K562 (cell line): ENCODE measurements at regions of chr19 and their contacts with region 1.

Region 1: GRCh38 chr19:19554074-19555023 is 16.3 kb downstream of the CILP2 start:
- DNase-seq: peak; percentile 78 to 88 (median 85)
- ATAC-seq: peak; percentile 88
- H3K4me3 ChIP-seq: no peak overlapping the region
- H3K27ac ChIP-seq: no peak overlapping the region
- H3K4me1 ChIP-seq: peaks cover 0 to 27% of the 10 kb centered on the region in 2 experiments; a peak in 2 of 5 replicates
- H3K27me3 ChIP-seq: peaks cover 2 to 36% of the 10 kb centered on the region in 2 experiments; a peak in 4 of 5 replicates
- CTCF ChIP-seq: peak; percentile 76 to 87 (median 80)
- EP300 ChIP-seq: no peak
- POLR2A ChIP-seq: no peak
- RAD21 ChIP-seq: peak; percentile 15 to 70; a peak in 2 of 4 replicates

Region 2: GRCh38 chr19:19423322-19423721 is 131.0 kb before region 1 on chr19:
- CTCF ChIA-PET with region 1: no interaction called
- POLR2A ChIA-PET with region 1: no interaction called
- in situ Hi-C with region 1: no loop called
- intact Hi-C with region 1: no loop called
- DNase-seq: no peak
- ATAC-seq: no peak
- H3K4me3 ChIP-seq: no peak overlapping the region
- H3K27ac ChIP-seq: no peak overlapping the region
- H3K4me1 ChIP-seq: peaks cover 0 to 8% of the 10 kb centered on the region in 2 experiments; a peak in 3 of 5 replicates
- H3K27me3 ChIP-seq: no peaks in the 10 kb centered on the region
- CTCF ChIP-seq: no peak
- EP300 ChIP-seq: no peak
- POLR2A ChIP-seq: no peak
- RAD21 ChIP-seq: no peak

Region 3: DNA sequence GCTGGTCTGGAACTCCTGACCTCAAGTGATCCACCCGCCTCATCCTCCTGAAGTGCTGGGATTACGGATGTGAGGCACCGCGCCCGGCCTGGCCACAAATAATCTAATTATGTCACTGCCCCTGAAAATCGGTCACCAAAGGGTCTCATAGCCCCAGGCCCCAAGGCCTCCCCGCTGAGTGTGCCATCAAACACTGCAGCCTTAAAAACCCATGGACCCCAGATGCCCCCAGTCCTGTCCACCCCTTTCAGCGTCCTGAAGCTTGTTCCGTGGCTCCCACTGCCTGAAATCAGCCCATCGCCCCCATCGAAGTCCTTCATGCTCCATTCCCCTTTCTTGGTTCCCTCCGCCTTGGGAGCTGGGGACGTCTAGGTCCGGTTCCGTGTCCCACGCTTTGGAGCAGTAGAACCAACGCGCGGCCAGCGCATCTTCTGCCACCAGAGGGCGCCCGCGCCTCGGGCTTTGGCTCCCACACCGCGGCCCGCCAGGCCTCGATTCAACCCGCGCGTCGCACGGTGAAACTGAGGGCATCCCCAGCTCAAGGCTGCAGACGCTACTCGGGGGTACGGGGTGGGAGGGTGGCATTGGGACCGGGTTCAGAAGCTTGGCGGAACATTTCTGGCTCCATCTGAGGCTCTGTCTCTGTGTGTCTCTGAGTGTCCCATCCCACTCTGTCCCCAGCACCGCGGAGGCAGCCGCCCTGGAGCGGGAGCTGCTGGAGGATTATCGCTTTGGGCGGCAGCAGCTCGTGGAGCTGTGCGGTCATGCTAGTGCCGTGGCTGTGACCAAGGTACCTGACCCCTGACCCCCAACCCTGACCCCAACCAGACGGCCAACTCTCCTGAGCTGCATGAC is 22.2 kb before region 1 on chr19:
- CTCF ChIA-PET with region 1: interaction called, 9 read pairs
- POLR2A ChIA-PET with region 1: interaction called, 4 read pairs
- in situ Hi-C with region 1: no loop called
- intact Hi-C with region 1: loop called (anchors 1 kb)
- DNase-seq: peak; percentile 79 to 87 (median 80)
- ATAC-seq: peak; percentile 89
- H3K4me3 ChIP-seq: no peak overlapping the region
- H3K27ac ChIP-seq: no peak overlapping the region
- H3K4me1 ChIP-seq: peaks cover 5 to 25% of the 10 kb centered on the region in 2 experiments
- H3K27me3 ChIP-seq: no peaks in the 10 kb centered on the region
- CTCF ChIP-seq: peak; percentile 89 to 94 (median 90)
- EP300 ChIP-seq: no peak
- POLR2A ChIP-seq: 0 out of 2 replicates have a peak, but pooled peaks have one; percentile 33
- RAD21 ChIP-seq: peak; percentile 87 to 91

Region 4: DNA sequence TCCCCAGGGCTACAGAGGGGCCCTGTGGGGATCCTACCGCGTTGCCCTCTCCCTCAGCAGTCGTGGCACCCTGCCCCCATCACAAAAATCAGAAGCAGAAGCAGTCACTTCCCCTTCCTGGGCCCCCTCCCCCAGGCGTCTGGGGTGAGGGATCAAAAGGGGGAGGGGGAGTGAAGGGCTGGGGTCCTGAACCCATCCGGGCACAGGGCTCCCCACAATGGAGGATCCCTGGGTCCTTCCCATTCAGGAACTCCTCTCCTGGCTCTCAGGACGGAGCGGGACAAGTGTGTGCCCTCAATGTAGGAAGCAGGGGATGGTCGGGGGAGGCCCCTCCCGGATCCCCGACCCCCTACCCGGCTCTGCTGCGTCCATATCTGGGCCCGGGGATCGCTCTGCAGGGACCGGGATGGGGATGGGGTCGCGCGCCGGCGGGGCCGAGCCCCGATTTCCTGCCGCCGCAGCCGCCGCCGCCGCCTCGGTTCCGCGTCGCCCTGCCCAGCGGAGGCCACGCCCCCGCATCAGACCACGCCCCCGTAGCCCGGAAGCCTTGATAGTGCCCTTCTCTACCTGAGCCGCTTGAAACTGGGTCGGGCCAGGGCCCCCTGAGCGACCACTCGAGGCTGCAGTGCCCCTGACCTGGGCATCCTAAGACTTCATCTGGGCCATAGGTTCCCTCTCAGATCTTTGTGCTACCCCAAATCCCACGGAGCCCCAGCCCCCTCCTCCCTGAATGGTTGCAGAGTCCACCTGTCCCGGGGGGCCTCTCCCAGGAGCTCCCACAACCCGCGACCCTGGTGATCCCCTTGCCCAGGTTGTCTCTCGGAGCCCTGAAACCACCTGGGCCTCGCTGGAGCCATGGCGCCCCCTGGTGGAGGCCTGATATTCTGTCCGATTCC is 89.1 kb after region 1 on chr19 and contains the start of gene GMIP:
- CTCF ChIA-PET with region 1: no interaction called
- POLR2A ChIA-PET with region 1: no interaction called
- in situ Hi-C with region 1: loop called (anchors 25 kb)
- intact Hi-C with region 1: loop called (anchors 5 kb)
- DNase-seq: peak; percentile 84 to 94 (median 92)
- ATAC-seq: peak; percentile 94
- H3K4me3 ChIP-seq: peak within 1 kb of the TSS; percentile 84
- H3K27ac ChIP-seq: peak within 1 kb of the TSS; percentile 75
- H3K4me1 ChIP-seq: peaks cover 3 to 18% of the 10 kb centered on the region in 2 experiments; a peak in 3 of 5 replicates
- H3K27me3 ChIP-seq: no peaks in the 10 kb centered on the region
- CTCF ChIP-seq: peak; percentile 80 to 87 (median 82)
- EP300 ChIP-seq: no peak
- POLR2A ChIP-seq: peak; percentile 61
- RAD21 ChIP-seq: peak; percentile 66 to 77
- polyA plus RNA-seq, gene GMIP: 0.14 to 0.38 TPM

Region 5: GRCh38 chr19:19943848-19944582 is 389.7 kb after region 1 on chr19:
- CTCF ChIA-PET with region 1: no interaction called
- POLR2A ChIA-PET with region 1: no interaction called
- in situ Hi-C with region 1: no loop called
- intact Hi-C with region 1: no loop called
- DNase-seq: peak in 3 of 4 experiments; percentile 14 to 50 (median 28)
- ATAC-seq: peak; percentile 74
- H3K4me3 ChIP-seq: no peak overlapping the region
- H3K27ac ChIP-seq: peak overlapping the region; percentile 61
- H3K4me1 ChIP-seq: peaks cover 0 to 10% of the 10 kb centered on the region in 2 experiments; a peak in 3 of 5 replicates
- H3K27me3 ChIP-seq: no peaks in the 10 kb centered on the region
- CTCF ChIP-seq: no peak
- EP300 ChIP-seq: peak; percentile 84
- POLR2A ChIP-seq: no peak
- RAD21 ChIP-seq: no peak

Region 6: GRCh38 chr19:19956434-19957075 is 402.2 kb after region 1 on chr19:
- CTCF ChIA-PET with region 1: no interaction called
- POLR2A ChIA-PET with region 1: no interaction called
- in situ Hi-C with region 1: loop called (anchors 10 kb)
- intact Hi-C with region 1: no loop called
- DNase-seq: peak in 1 of 4 experiments; percentile 8
- ATAC-seq: peak; percentile 73
- H3K4me3 ChIP-seq: no peak overlapping the region
- H3K27ac ChIP-seq: no peak overlapping the region
- H3K4me1 ChIP-seq: no peaks in the 10 kb centered on the region
- H3K27me3 ChIP-seq: no peaks in the 10 kb centered on the region
- CTCF ChIP-seq: no peak
- EP300 ChIP-seq: no peak
- POLR2A ChIP-seq: no peak
- RAD21 ChIP-seq: no peak